ENCODE measurements at regions of chr1 and their contacts with region 1.

Region 1: DNA sequence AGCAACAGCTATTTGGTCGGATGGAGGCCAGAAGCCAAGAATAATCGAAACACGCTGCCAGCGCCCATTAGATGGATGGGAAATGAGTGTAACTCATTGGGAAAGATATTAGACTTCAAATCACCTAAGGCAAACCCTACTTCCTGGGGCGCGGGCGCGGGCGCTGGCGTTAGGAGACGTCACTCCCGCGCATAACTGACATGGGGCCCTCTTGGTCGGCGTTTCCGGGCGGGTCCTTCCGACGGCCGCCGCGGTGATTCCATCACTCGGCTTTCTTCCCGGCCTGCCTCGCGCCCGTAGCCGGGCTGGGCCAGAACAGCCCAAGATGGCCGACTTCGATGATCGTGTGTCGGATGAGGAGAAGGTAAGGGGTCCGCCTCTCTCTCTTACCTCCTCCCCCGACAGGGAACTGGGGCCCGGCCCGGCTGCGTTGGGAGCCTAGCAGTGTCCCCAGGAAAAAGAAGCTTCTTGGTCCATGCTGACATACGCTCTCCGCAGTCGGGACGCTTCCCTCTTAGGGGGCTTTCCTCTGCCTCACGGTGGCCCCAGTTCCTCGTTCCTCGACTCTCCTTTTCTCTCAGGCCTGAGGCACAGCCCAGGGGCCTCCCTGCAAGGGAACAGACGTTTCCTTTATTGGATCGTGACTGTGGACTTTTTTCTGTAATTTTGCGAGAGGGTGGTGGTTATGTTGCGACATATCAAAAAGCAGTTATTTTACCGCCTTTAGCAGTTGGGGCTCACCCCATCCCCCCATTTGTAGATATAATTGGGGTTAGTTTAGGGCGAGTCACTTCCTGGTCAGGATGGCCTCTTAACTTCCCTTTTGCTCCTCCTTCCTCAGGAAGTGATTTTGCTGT is at the start of gene CAPZA1:
- DNase-seq: peak; percentile 86 to 97 (median 90)
- ATAC-seq: peak; percentile 90
- H3K4me3 ChIP-seq: peak within 1 kb of the TSS; percentile 79
- H3K27ac ChIP-seq: peak within 1 kb of the TSS; percentile 99
- H3K4me1 ChIP-seq: peaks cover 6 to 16% of the 10 kb centered on the region in 2 experiments
- H3K27me3 ChIP-seq: no peaks in the 10 kb centered on the region
- CTCF ChIP-seq: no peak
- EP300 ChIP-seq: peak; percentile 82
- POLR2A ChIP-seq: peak; percentile 98
- RAD21 ChIP-seq: no peak; a peak in 1 of 4 replicates
- polyA plus RNA-seq, gene CAPZA1: 805 to 1,020 TPM

Region 2: GRCh38 chr1:112466078-112466660 is 153.6 kb before region 1 on chr1:
- CTCF ChIA-PET with region 1: no interaction called
- POLR2A ChIA-PET with region 1: interaction called, 3 read pairs
- in situ Hi-C with region 1: no loop called
- intact Hi-C with region 1: loop called (anchors 5 kb)
- DNase-seq: peak; percentile 85 to 94 (median 92)
- ATAC-seq: peak; percentile 90
- H3K4me3 ChIP-seq: no peak overlapping the region
- H3K27ac ChIP-seq: no peak overlapping the region
- H3K4me1 ChIP-seq: peaks cover 14 to 21% of the 10 kb centered on the region in 2 experiments
- H3K27me3 ChIP-seq: peaks cover 7 to 8% of the 10 kb centered on the region in 2 experiments
- CTCF ChIP-seq: peak; percentile 93 to 97 (median 94)
- EP300 ChIP-seq: 0 out of 2 replicates have a peak, but pooled peaks have one; percentile 8
- POLR2A ChIP-seq: no peak
- RAD21 ChIP-seq: peak; percentile 95 to 96

Region 3: DNA sequence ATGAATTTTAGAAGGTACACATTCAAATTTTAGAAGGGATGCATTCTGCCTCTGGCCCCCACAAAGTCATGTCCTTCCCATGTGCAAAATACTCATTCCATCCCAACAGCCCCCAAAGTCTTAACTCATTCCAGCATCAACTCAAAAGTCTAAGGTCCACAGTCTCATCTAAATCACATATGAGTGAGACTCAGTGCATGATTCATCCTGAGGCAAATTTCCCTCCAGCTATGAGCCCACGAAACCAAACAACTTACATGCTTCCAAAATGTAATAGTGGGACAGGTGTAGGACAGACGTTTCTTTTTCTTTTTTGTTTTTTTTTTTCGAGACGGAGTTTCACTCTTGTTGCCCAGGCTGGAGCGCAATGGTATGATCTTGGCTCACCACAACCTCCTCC is 123.5 kb before region 1 on chr1:
- CTCF ChIA-PET with region 1: no interaction called
- POLR2A ChIA-PET with region 1: interaction called, 4 read pairs
- in situ Hi-C with region 1: loop called (anchors 5 kb)
- intact Hi-C with region 1: loop called (anchors 2 kb)
- DNase-seq: no peak
- ATAC-seq: no peak
- H3K4me3 ChIP-seq: no peak overlapping the region
- H3K27ac ChIP-seq: no peak overlapping the region
- H3K4me1 ChIP-seq: no peaks in the 10 kb centered on the region
- H3K27me3 ChIP-seq: peaks cover 26 to 49% of the 10 kb centered on the region in 2 experiments
- CTCF ChIP-seq: no peak
- EP300 ChIP-seq: no peak
- POLR2A ChIP-seq: no peak
- RAD21 ChIP-seq: no peak

Region 4: DNA sequence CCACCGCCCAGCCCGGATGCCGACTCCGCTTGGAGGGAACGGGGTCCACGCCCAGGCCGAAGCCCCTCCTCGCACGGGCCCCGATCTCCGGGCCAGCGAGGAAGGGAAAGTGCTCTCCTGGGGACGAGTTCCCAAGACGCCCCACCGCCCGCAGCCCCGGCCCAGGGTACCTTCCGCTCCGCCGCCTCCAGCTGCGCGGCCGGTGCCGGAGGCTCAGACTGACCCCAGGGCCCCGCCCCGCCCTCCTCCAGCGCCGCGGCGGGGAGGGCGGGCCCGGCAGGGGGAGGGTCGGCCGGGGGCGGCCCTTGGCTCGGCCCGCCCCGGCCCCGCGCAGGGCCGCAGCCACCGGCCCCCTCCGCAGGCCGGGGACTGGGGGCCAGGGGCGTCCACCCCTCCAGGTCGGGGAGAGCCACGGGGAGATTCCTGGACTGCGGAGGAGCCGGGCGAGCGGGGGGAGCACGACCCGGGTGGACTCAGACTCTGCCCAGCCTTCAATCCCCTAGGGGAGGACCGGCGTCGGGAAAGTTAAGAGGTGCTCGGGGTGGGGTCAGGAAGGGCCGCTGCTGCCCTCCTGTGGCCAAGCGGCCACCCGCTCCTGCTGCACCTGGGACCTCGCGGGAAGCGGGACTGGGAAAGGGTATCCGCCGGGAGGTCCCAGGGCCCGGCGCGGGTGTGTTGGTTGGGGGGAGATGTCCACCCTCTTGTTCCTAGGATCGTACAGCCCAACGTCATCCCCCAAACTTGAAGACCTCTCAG is 87.3 kb after region 1 on chr1 and contains the start of gene RHOC:
- CTCF ChIA-PET with region 1: interaction called, 3 read pairs
- POLR2A ChIA-PET with region 1: interaction called, 8 read pairs
- in situ Hi-C with region 1: loop called (anchors 5 kb)
- intact Hi-C with region 1: loop called (anchors 1 kb)
- DNase-seq: peak; percentile 90 to 96 (median 94)
- ATAC-seq: peak; percentile 83
- H3K4me3 ChIP-seq: peak within 1 kb of the TSS; percentile 94
- H3K27ac ChIP-seq: peak within 1 kb of the TSS; percentile 97
- H3K4me1 ChIP-seq: peaks cover 44 to 47% of the 10 kb centered on the region in 2 experiments
- H3K27me3 ChIP-seq: no peaks in the 10 kb centered on the region
- CTCF ChIP-seq: peak; percentile 96 to 97 (median 96)
- EP300 ChIP-seq: peak; percentile 29; the same call in 1 of the 2 replicates
- POLR2A ChIP-seq: peak; percentile 76
- RAD21 ChIP-seq: peak; percentile 98 to 99
- polyA plus RNA-seq, gene RHOC: 35.2 to 82.7 TPM

Region 5: GRCh38 chr1:112803906-112804762 is 184.4 kb after region 1 on chr1:
- CTCF ChIA-PET with region 1: no interaction called
- POLR2A ChIA-PET with region 1: no interaction called
- in situ Hi-C with region 1: loop called (anchors 10 kb)
- intact Hi-C with region 1: loop called (anchors 10 kb)
- DNase-seq: peak; percentile 73 to 85 (median 76)
- ATAC-seq: peak; percentile 98
- H3K4me3 ChIP-seq: no peak overlapping the region
- H3K27ac ChIP-seq: no peak overlapping the region
- H3K4me1 ChIP-seq: peaks cover 0 to 3% of the 10 kb centered on the region in 2 experiments; a peak in 1 of 5 replicates
- H3K27me3 ChIP-seq: peaks cover 19 to 28% of the 10 kb centered on the region in 2 experiments; a peak in 4 of 5 replicates
- CTCF ChIP-seq: peak; percentile 96 to 98 (median 97)
- EP300 ChIP-seq: 0 out of 2 replicates have a peak, but pooled peaks have one; percentile 22
- POLR2A ChIP-seq: no peak
- RAD21 ChIP-seq: peak; percentile 99 to 100

Measured in K562 (cell line).